ENCODE measurements at regions of chr17 and their contacts with region 1.

Region 1: DNA sequence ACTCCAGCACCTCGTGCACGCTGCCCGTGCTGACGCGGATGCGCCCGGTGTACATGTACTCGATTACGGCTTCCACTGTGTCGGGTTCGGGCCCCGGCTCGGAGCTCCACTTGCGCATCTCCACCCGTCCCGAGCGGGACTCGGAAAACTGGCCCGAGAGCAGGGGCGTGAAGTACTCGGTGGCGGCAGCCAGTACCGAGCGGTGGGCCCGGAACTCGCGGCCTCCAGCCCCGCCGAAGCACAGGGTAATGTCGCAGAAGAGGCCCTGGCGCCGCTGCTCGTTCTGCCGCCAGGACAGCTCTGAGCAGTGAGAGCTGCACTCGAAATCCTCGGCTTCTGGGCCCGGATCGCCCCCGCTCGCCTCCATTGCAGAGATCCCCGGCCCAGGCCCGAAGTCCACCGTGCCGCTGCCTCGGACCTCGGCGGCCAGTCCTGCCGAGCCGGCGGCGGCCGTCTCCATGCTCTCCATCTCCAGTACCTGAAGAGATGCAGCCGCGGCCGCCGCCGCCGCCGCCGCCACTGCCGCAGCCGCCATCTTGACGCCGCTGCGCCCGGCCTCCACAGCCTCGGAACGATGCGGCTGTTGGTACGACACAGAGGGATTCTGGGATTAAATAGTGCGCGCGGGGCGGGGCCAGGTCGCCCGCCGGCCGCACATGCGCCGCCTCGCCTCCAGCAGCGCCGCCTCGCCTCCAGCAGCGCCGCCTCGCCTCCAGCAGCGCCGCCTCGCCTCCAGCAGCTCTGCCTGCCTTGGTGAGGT is at the start of gene KLHL11:
- DNase-seq: peak; percentile 72 to 94 (median 87)
- ATAC-seq: peak; percentile 91
- H3K4me3 ChIP-seq: peak within 1 kb of the TSS; percentile 92 to 99
- H3K4me3 Mint-ChIP-seq: no peak within 1 kb of the TSS
- H3K27ac ChIP-seq: peak within 1 kb of the TSS; percentile 85 to 93
- H3K27ac Mint-ChIP-seq: no peak within 1 kb of the TSS
- H3K4me1 ChIP-seq: peaks cover 32% of the 10 kb centered on the region
- H3K4me1 Mint-ChIP-seq: peaks cover 22% of the 10 kb centered on the region
- H3K27me3 ChIP-seq: no peaks in the 10 kb centered on the region
- H3K27me3 Mint-ChIP-seq: no peaks in the 10 kb centered on the region
- CTCF ChIP-seq: no peak
- total RNA-seq, gene KLHL11: 38.4 to 38.9 TPM

Region 2: DNA sequence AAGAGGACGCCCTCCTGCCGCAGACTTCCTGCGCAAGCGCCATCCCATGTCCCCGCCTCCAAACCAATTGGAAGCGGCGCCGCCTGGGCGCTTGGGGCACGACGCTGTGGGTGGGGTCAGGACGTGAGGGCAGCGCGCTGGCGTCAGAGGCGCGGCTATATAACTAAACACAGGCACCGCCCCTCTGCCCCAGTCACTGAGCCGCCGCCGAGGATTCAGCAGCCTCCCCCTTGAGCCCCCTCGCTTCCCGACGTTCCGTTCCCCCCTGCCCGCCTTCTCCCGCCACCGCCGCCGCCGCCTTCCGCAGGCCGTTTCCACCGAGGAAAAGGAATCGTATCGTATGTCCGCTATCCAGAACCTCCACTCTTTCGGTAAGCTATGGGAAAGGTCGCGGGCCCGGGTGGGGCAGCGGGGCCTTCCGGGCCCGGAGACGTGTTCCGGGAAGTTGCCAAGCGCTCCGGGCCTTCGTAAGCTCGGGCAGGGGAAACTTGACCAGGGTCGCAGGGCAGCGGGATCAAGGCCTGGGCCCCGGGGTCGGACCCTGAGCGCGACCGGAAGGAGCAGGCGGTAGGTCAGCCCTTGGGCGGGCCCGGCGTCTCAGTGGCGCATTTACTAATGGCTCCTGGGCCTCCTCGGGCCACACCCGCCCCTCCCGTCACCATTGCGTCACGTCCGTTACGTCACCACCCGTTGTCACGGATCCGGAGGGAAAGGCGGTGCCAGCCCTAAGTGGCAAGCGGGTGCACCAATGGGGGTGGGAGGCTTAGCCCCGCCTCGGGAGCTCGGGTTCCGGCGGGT is 176.1 kb before region 1 on chr17 and contains the start of gene EIF1:
- CTCF ChIA-PET with region 1: no interaction called
- POLR2A ChIA-PET with region 1: interaction called, 7 read pairs
- intact Hi-C with region 1: loop called in 1 of 2 experiments (anchors 1 kb)
- DNase-seq: peak; percentile 99 to 100 (median 100)
- ATAC-seq: peak; percentile 76
- H3K4me3 ChIP-seq: peak within 1 kb of the TSS; percentile 65 to 89
- H3K4me3 Mint-ChIP-seq: peak within 1 kb of the TSS; percentile 95
- H3K27ac ChIP-seq: peak within 1 kb of the TSS; percentile 93 to 100
- H3K27ac Mint-ChIP-seq: peak within 1 kb of the TSS; percentile 99
- H3K4me1 ChIP-seq: peaks cover 31% of the 10 kb centered on the region
- H3K4me1 Mint-ChIP-seq: peaks cover 36% of the 10 kb centered on the region
- H3K27me3 ChIP-seq: no peaks in the 10 kb centered on the region
- H3K27me3 Mint-ChIP-seq: no peaks in the 10 kb centered on the region
- CTCF ChIP-seq: no peak
- total RNA-seq, gene EIF1: 3,749 to 3,996 TPM

Region 3: GRCh38 chr17:41835800-41836549 is 29.0 kb before region 1 on chr17 and contains the start of gene NT5C3B:
- CTCF ChIA-PET with region 1: interaction called, 3 read pairs
- POLR2A ChIA-PET with region 1: interaction called, 5 read pairs
- intact Hi-C with region 1: loop called (anchors 1 to 2 kb)
- DNase-seq: peak in 8 of 9 experiments; percentile 43 to 79 (median 58)
- ATAC-seq: peak; percentile 82
- H3K4me3 ChIP-seq: peak within 1 kb of the TSS; percentile 65 to 82
- H3K4me3 Mint-ChIP-seq: peak within 1 kb of the TSS; percentile 88
- H3K27ac ChIP-seq: peak within 1 kb of the TSS in 1 of 2 experiments; percentile 56
- H3K27ac Mint-ChIP-seq: peak within 1 kb of the TSS; percentile 37
- H3K4me1 ChIP-seq: peaks cover 13% of the 10 kb centered on the region
- H3K4me1 Mint-ChIP-seq: peaks cover 16% of the 10 kb centered on the region
- H3K27me3 ChIP-seq: no peaks in the 10 kb centered on the region
- H3K27me3 Mint-ChIP-seq: no peaks in the 10 kb centered on the region
- CTCF ChIP-seq: no peak
- total RNA-seq, gene NT5C3B: 26.5 to 27.0 TPM

Region 4: DNA sequence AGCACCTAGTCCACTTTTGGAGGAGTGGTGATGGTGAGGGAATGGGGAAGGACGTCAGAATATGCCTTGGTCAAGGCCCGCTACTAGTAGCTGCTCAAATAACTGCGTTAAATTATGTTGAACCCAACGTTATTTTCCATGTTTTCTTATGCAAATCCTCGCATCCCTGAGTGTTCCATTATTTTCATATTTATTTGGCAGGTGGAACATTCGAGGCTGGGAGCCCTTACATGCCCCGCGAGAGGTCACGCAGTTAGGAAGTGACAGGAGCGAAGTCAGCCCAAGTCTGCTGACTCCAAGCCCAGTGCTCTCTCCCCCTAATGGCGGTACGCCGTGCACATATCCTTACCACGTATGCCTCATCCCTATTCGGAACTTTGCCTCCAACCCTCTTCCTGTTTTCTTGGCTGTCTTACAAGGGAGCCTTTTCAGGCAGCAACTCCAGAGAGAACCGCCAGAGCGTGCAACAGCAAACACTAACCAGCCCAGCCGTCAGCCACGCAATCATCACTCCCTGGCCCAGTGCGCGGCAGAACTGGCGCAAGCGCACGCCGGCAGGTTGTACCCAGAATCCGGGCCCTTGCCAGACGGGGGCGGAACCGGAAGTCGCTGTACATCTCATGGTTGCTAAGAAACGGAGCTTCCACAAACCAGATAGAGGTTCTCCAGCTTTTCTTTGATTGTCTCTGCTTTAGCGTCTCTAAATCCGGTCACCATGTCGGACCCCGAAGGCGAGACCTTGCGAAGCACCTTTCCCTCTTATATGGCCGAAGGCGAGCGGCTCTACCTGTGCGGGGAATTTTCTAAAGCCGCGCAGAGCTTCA is 65.2 kb after region 1 on chr17 and contains the start of gene ODAD4:
- CTCF ChIA-PET with region 1: no interaction called
- POLR2A ChIA-PET with region 1: no interaction called
- intact Hi-C with region 1: loop called in 1 of 2 experiments (anchors 1 kb)
- DNase-seq: peak; percentile 93 to 99 (median 97)
- ATAC-seq: peak; percentile 99
- H3K4me3 ChIP-seq: peak within 1 kb of the TSS; percentile 61 to 73
- H3K4me3 Mint-ChIP-seq: peak within 1 kb of the TSS; percentile 94
- H3K27ac ChIP-seq: peak within 1 kb of the TSS; percentile 88 to 92
- H3K27ac Mint-ChIP-seq: peak within 1 kb of the TSS; percentile 93
- H3K4me1 ChIP-seq: peaks cover 12% of the 10 kb centered on the region
- H3K4me1 Mint-ChIP-seq: peaks cover 23% of the 10 kb centered on the region
- H3K27me3 ChIP-seq: no peaks in the 10 kb centered on the region
- H3K27me3 Mint-ChIP-seq: no peaks in the 10 kb centered on the region
- CTCF ChIP-seq: peak; percentile 62
- total RNA-seq, gene ODAD4: 1.1 to 1.6 TPM

Region 5: DNA sequence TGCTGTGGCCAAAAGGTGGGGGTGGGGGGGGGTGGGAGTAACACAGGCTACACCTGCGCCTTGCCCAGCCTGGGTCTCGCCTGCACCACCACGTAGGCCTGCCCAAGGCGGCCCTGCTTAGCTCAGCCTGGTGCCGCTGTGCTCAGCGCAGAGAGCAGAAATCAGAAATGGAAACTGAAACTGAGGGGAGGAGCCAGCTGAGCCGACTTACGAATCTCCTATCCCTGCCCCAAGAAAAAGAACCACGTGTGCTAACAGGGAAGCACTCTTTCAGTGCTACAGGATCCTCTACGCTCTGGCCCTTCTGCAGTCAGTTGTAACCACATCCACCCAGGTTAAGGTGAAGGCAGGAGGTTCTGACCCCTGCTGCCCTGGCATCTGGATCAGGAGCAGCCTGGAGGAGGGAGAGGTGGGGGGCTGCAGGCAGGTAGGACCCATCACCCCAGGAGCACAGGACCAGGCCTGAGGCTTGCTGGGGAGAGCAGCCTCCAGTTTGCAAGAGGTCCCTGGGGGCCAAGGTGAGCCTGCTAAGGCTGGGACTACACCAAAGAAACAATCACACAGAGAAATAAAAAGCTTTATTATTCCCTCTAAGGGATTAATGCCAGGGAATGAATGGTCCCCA is 247.6 kb after region 1 on chr17 and contains the start of gene DHX58:
- CTCF ChIA-PET with region 1: no interaction called
- POLR2A ChIA-PET with region 1: no interaction called
- intact Hi-C with region 1: loop called in 1 of 2 experiments (anchors 10 kb)
- DNase-seq: peak; percentile 65 to 94 (median 81)
- ATAC-seq: peak; percentile 80
- H3K4me3 ChIP-seq: peak within 1 kb of the TSS; percentile 66 to 88
- H3K4me3 Mint-ChIP-seq: peak within 1 kb of the TSS; percentile 92
- H3K27ac ChIP-seq: peak within 1 kb of the TSS; percentile 81 to 90
- H3K27ac Mint-ChIP-seq: peak within 1 kb of the TSS; percentile 95
- H3K4me1 ChIP-seq: peaks cover 30% of the 10 kb centered on the region
- H3K4me1 Mint-ChIP-seq: peaks cover 49% of the 10 kb centered on the region
- H3K27me3 ChIP-seq: no peaks in the 10 kb centered on the region
- H3K27me3 Mint-ChIP-seq: no peaks in the 10 kb centered on the region
- CTCF ChIP-seq: no peak
- total RNA-seq, gene DHX58: 32.8 to 39.1 TPM

Measured in CD8-positive, alpha-beta T cell (primary cell).